Natural killer cell (primary cell): ENCODE measurements at regions of chr4 and their contacts with region 1.

Region 1: DNA sequence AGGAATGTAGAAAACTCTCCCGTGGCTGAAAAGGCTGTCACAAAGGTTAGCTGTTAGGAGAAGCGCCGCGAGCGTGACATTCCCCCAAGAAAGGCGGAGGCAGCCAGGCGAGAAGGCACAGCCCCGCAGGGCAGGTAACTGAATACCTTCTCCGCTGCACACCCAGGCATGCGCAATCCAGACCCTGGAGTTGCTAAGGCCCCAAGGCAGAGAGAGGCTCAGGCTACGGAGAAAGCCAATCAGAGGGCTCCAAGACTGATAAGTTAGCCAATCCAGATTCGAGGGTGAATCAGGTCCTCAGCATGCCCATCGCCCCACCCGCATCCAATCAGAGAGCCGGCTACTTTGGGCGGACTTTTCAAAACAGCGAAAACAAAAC is 485 bp upstream of the CCNG2 start:
- DNase-seq: peak; percentile 98 to 99
- ATAC-seq: peak; percentile 90 to 95 (median 90)
- H3K4me3 ChIP-seq: peak overlapping the region; percentile 98
- H3K4me3 Mint-ChIP-seq: peak overlapping the region; percentile 98
- H3K27ac ChIP-seq: peak overlapping the region; percentile 75
- H3K27ac Mint-ChIP-seq: peak overlapping the region; percentile 93 to 96
- H3K4me1 ChIP-seq: peaks cover 20% of the 10 kb centered on the region
- H3K4me1 Mint-ChIP-seq: peaks cover 16 to 21% of the 10 kb centered on the region in 2 donors
- H3K27me3 ChIP-seq: no peaks in the 10 kb centered on the region
- H3K27me3 Mint-ChIP-seq: no peaks in the 10 kb centered on the region
- CTCF ChIP-seq: no peak

Region 2: DNA sequence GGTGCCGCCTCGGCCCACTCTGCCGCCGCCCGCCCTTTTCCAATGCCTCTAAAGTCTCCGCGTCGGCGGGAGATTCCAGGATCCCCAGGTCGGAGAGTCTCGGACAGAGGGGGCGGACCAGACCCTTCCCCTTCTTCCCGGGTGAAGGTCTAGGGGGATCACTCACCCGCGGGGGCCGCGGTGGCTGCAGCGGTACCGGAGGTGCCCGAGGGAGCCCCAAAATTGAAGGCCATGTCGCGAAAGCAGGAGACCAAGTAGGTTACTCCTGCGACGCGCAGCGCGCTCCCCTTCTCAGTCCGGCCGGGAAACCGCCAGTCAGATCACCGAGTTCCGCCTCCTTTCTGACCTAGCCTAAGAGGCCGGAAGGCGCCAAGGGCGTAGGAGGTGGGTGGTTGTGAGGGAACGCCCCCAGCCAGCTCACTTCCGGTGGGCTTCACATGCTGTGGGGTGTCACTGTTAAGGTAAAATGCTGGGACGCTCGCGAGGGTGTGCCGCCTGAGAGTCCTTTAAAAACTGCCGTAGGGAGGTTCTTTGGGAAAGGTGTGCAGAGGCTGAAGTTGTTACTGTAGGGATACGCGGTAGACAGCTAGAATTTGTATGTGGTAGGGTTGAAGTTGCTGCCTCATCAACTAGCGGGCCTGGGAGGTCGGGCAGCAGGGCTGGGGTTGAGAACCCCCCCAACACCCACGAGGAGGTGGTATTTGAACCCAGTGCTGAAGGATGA is 1008.2 kb before region 1 on chr4 and contains the start of gene NUP54:
- intact Hi-C with region 1: loop called (anchors 10 kb)
- DNase-seq: peak; percentile 92 to 97
- ATAC-seq: peak; percentile 97 to 100 (median 99)
- H3K4me3 ChIP-seq: peak within 1 kb of the TSS; percentile 96
- H3K4me3 Mint-ChIP-seq: peak within 1 kb of the TSS; percentile 96
- H3K27ac ChIP-seq: peak within 1 kb of the TSS; percentile 87
- H3K27ac Mint-ChIP-seq: peak within 1 kb of the TSS; percentile 95 to 97
- H3K4me1 ChIP-seq: peaks cover 10% of the 10 kb centered on the region
- H3K4me1 Mint-ChIP-seq: peaks cover 21 to 29% of the 10 kb centered on the region in 2 donors
- H3K27me3 ChIP-seq: no peaks in the 10 kb centered on the region
- H3K27me3 Mint-ChIP-seq: peaks cover 0 to 2% of the 10 kb centered on the region in 2 donors
- CTCF ChIP-seq: no peak
- total RNA-seq, gene NUP54: 102 to 114 (median 108) TPM

Region 3: GRCh38 chr4:76949276-76950051 is 207.1 kb before region 1 on chr4 and contains the start of gene SEPTIN11:
- intact Hi-C with region 1: loop called (anchors 2 kb)
- DNase-seq: peak; percentile 81 to 93
- ATAC-seq: peak; percentile 78 to 88 (median 84)
- H3K4me3 ChIP-seq: peak within 1 kb of the TSS; percentile 77
- H3K4me3 Mint-ChIP-seq: peak within 1 kb of the TSS; percentile 93
- H3K27ac ChIP-seq: peak within 1 kb of the TSS; percentile 54
- H3K27ac Mint-ChIP-seq: peak within 1 kb of the TSS; percentile 77 to 90
- H3K4me1 ChIP-seq: peaks cover 16% of the 10 kb centered on the region
- H3K4me1 Mint-ChIP-seq: peaks cover 17 to 47% of the 10 kb centered on the region in 2 donors
- H3K27me3 ChIP-seq: no peaks in the 10 kb centered on the region
- H3K27me3 Mint-ChIP-seq: no peaks in the 10 kb centered on the region
- CTCF ChIP-seq: no peak
- total RNA-seq, gene SEPTIN11: 38.6 to 52.8 (median 46.2) TPM

Region 4: GRCh38 chr4:76984788-76985211 is 171.7 kb before region 1 on chr4:
- intact Hi-C with region 1: loop called (anchors 5 kb)
- DNase-seq: no peak
- ATAC-seq: no peak
- H3K4me3 ChIP-seq: no peak overlapping the region
- H3K4me3 Mint-ChIP-seq: no peak overlapping the region
- H3K27ac ChIP-seq: no peak overlapping the region
- H3K27ac Mint-ChIP-seq: peak overlapping the region in 1 of 2 donors; percentile 10
- H3K4me1 ChIP-seq: peaks cover 30% of the 10 kb centered on the region
- H3K4me1 Mint-ChIP-seq: peaks cover 57 to 64% of the 10 kb centered on the region in 2 donors
- H3K27me3 ChIP-seq: no peaks in the 10 kb centered on the region
- H3K27me3 Mint-ChIP-seq: no peaks in the 10 kb centered on the region
- CTCF ChIP-seq: no peak

Region 5: DNA sequence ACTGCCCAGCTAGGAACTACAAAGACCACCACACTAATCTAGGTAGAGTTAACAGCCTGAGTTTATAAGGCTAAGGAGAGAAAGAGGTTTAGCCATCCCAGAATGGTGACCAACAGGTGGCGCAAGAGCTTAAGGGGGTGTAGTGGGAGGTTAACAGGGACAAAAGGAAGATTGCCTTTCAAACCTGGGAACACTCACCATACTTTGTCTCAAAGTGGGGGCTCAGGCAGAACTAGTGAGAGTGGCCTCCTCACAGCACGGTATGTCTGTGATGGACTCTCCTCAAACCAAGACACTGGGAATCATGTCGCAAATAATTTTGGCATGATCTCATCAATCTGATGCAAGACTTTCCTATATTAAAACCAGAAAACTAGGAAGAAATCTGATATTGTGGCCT is 104.2 kb before region 1 on chr4:
- intact Hi-C with region 1: loop called (anchors 1 kb)
- DNase-seq: peak; percentile 48 to 78
- ATAC-seq: peak; percentile 41 to 75 (median 73)
- H3K4me3 ChIP-seq: no peak overlapping the region
- H3K4me3 Mint-ChIP-seq: no peak overlapping the region
- H3K27ac ChIP-seq: no peak overlapping the region
- H3K27ac Mint-ChIP-seq: peak overlapping the region in 1 of 2 donors; percentile 68
- H3K4me1 ChIP-seq: no peaks in the 10 kb centered on the region
- H3K4me1 Mint-ChIP-seq: peaks cover 0 to 4% of the 10 kb centered on the region in 2 donors
- H3K27me3 ChIP-seq: no peaks in the 10 kb centered on the region
- H3K27me3 Mint-ChIP-seq: no peaks in the 10 kb centered on the region
- CTCF ChIP-seq: peak; percentile 61

Region 6: DNA sequence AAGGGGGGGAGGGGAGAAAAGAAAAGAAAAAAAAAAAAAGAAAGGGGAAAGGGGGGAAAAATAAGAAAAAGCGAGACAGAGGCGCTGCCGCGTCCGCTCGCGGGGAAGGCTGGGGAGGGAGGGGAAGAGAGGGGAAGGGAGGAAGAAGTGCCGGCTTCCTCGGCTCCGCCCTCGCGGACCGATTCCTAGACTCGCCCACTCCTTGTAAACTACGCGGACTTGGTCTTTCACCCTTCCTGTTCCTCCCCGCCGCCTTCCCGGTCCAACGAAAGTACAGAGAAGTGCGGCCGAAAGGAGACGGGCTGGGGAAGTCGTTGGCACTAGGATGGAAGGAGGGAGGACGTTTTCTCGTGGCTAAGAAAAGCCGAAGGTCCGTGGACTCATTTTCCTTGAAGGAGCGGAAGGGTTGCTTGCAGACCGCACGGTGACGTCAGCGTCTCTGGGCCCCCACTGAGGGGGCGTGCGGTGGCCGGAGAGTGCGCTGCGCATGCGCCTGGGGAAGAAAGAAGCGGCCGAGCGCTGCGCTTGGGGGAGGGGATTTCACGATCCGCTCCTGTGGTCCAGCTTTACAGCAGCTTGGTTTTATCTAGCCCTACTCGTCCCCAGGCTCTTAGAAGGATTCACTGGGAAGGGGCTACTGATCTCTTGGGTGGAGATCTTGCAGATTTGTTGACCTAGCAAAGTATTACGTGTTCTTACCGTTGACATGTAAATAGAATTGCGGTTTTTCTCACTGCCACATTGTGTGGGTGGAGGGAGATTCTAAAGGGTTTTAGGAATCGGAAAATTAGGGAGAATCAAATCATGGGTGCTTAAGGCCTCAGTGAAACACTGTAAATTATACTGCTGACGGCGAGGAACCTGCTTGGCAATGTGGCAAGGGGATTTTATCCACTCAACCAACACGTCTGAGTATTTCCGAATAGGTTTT is 80.4 kb before region 1 on chr4 and contains the start of gene CCNI:
- intact Hi-C with region 1: loop called (anchors 1 kb)
- DNase-seq: peak; percentile 96 to 97
- ATAC-seq: peak; percentile 78 to 94 (median 82)
- H3K4me3 ChIP-seq: peak within 1 kb of the TSS; percentile 61
- H3K4me3 Mint-ChIP-seq: peak within 1 kb of the TSS; percentile 95
- H3K27ac ChIP-seq: peak within 1 kb of the TSS; percentile 99
- H3K27ac Mint-ChIP-seq: no peak within 1 kb of the TSS
- H3K4me1 ChIP-seq: peaks cover 16% of the 10 kb centered on the region
- H3K4me1 Mint-ChIP-seq: peaks cover 43 to 46% of the 10 kb centered on the region in 2 donors
- H3K27me3 ChIP-seq: no peaks in the 10 kb centered on the region
- H3K27me3 Mint-ChIP-seq: peaks cover 0 to 3% of the 10 kb centered on the region in 2 donors
- CTCF ChIP-seq: no peak
- total RNA-seq, gene CCNI: 243 to 266 (median 259) TPM

Region 7: GRCh38 chr4:77095101-77095821 is 61.3 kb before region 1 on chr4:
- intact Hi-C with region 1: loop called (anchors 5 kb)
- DNase-seq: peak; percentile 62 to 81
- ATAC-seq: peak; percentile 91 to 100 (median 100)
- H3K4me3 ChIP-seq: no peak overlapping the region
- H3K4me3 Mint-ChIP-seq: no peak overlapping the region
- H3K27ac ChIP-seq: no peak overlapping the region
- H3K27ac Mint-ChIP-seq: no peak overlapping the region
- H3K4me1 ChIP-seq: peaks cover 3% of the 10 kb centered on the region
- H3K4me1 Mint-ChIP-seq: peaks cover 7 to 13% of the 10 kb centered on the region in 2 donors
- H3K27me3 ChIP-seq: no peaks in the 10 kb centered on the region
- H3K27me3 Mint-ChIP-seq: no peaks in the 10 kb centered on the region
- CTCF ChIP-seq: peak; percentile 94

Region 8: GRCh38 chr4:77347341-77347966 is 190.9 kb after region 1 on chr4:
- intact Hi-C with region 1: no loop called
- DNase-seq: no peak
- ATAC-seq: no peak
- H3K4me3 ChIP-seq: no peak overlapping the region
- H3K4me3 Mint-ChIP-seq: no peak overlapping the region
- H3K27ac ChIP-seq: no peak overlapping the region
- H3K27ac Mint-ChIP-seq: no peak overlapping the region
- H3K4me1 ChIP-seq: no peaks in the 10 kb centered on the region
- H3K4me1 Mint-ChIP-seq: no peaks in the 10 kb centered on the region
- H3K27me3 ChIP-seq: no peaks in the 10 kb centered on the region
- H3K27me3 Mint-ChIP-seq: peaks cover 2 to 16% of the 10 kb centered on the region in 2 donors
- CTCF ChIP-seq: no peak